Mammary epithelial cell (primary cell): ENCODE measurements at regions of chr10 and their contacts with region 1.

Region 1: GRCh38 chr10:17599089-17599488 is 18.1 kb downstream of the HACD1 start:
- DNase-seq: no peak
- H3K4me3 ChIP-seq: no peak overlapping the region
- H3K27ac ChIP-seq: no peak overlapping the region
- H3K4me1 ChIP-seq: no peaks in the 10 kb centered on the region
- H3K27me3 ChIP-seq: no peaks in the 10 kb centered on the region
- CTCF ChIP-seq: peak in 1 of 2 donors; percentile 32

Region 2: DNA sequence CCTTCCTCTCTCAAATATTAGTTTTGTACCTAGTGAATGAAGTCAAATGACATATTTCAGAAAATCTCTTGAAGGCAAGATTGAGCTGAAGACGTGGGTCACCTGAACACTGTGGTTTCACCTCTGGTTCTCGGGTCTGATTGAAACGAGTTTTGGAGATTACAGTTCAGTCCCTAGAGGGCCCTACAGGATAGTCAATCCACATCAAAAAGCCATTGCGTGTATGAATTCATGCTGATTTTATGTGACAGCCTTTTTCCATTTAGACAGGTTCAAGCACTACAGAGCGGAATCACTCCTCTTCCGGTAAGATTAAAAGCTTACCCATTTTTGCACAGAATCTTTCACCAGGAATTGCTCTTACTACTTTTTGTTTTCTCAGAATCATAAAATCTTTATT is 308.9 kb before region 1 on chr10:
- CTCF ChIA-PET with region 1: no interaction called
- dilution Hi-C with region 1: no loop called
- in situ Hi-C with region 1: no loop called
- intact Hi-C with region 1: loop called (anchors 1 kb)
- DNase-seq: peak; percentile 23
- H3K4me3 ChIP-seq: no peak overlapping the region
- H3K27ac ChIP-seq: no peak overlapping the region
- H3K4me1 ChIP-seq: no peaks in the 10 kb centered on the region
- H3K27me3 ChIP-seq: no peaks in the 10 kb centered on the region
- CTCF ChIP-seq: peak; percentile 34 to 63

Region 3: GRCh38 chr10:17409170-17409733 is 189.8 kb before region 1 on chr10:
- CTCF ChIA-PET with region 1: interaction called, 4 read pairs
- dilution Hi-C with region 1: no loop called
- in situ Hi-C with region 1: no loop called
- intact Hi-C with region 1: loop called (anchors 1 kb)
- DNase-seq: no peak
- H3K4me3 ChIP-seq: no peak overlapping the region
- H3K27ac ChIP-seq: no peak overlapping the region
- H3K4me1 ChIP-seq: no peaks in the 10 kb centered on the region
- H3K27me3 ChIP-seq: peaks cover 2% of the 10 kb centered on the region
- CTCF ChIP-seq: peak; percentile 53 to 54

Region 4: DNA sequence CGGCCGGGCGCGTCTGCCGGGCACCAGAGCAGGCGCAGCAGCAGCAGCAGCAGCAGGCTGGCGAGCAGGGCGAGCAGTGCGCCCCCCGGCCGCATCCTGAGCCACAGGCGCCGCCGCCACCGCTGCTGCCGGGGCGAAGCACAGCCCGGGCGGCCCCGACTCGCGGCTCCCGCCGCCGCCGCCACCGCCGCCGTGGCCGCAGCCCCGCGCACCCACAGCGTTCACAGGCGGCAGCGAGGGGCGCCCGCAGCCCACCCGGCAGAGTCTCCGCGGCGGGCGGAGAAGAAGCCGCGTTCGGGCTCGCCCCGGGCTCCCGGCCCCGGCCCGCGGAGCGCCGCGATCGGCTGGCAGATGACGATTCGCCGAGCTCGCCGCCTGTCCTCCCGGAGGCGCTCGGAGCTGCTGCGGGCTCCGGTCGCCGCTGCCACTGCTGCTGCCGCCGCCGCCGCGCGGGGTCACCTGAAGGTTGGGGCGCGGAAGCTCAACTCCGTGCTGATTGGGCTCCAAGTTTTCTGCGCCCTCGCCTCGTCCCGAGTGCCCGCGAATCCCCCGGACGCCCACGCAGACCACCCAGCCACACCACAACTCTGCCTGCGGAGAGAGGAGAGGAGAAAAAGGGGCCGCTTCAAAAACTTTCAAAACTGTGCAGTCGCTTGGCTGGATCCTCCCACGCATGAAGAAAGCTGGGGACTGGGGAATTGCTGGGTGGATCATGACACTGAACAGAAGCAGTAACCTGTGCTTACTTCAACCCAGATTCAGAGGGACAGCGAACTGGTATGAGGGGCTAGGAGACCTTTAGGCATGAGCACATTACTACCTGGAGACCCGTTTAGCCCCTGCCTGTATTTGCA is 144.7 kb before region 1 on chr10 and contains the start of gene ST8SIA6:
- CTCF ChIA-PET with region 1: no interaction called
- dilution Hi-C with region 1: no loop called
- in situ Hi-C with region 1: no loop called
- intact Hi-C with region 1: loop called (anchors 1 kb)
- DNase-seq: peak; percentile 42
- H3K4me3 ChIP-seq: peak within 1 kb of the TSS; percentile 37 to 51 (median 47)
- H3K27ac ChIP-seq: no peak within 1 kb of the TSS
- H3K4me1 ChIP-seq: peaks cover 6% of the 10 kb centered on the region
- H3K27me3 ChIP-seq: peaks cover 5% of the 10 kb centered on the region
- CTCF ChIP-seq: no peak
- total RNA-seq, gene ST8SIA6: 0.17 TPM in 1 of 2 donors, not detected in the other

Region 5: DNA sequence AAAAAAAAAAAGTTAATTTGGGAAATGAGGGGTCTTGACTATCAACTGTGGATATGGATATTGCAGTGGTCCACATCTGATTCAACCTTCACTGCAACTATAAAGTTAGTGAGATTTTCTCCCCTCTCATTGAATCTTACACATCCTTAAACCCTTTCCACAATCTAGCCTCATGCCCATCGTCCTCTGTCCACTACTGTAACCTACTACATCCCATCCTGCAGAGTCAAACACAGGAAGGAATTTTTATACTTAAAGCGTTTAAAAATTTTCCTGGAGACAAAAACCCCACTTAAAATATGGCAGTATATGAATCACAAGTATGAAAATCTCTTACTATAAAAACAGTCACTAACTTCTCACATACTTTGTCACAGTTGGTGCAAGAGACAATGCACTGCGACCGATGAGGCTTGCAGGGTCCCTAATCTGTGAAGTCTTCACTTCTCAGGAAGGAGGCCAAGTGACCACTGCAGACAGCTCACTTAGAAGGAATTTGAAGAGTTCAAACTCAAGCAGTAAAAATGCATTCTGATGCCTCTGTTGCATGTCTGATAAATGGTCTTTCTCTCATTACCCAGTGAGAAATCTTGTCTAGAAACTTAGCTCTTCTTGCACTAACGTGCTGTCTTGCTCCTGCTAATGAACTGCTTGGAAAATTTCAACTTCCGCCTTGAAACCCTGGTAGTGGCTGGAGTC is 94.4 kb before region 1 on chr10:
- CTCF ChIA-PET with region 1: no interaction called
- dilution Hi-C with region 1: no loop called
- in situ Hi-C with region 1: no loop called
- intact Hi-C with region 1: no loop called
- DNase-seq: no peak
- H3K4me3 ChIP-seq: no peak overlapping the region
- H3K27ac ChIP-seq: no peak overlapping the region
- H3K4me1 ChIP-seq: no peaks in the 10 kb centered on the region
- H3K27me3 ChIP-seq: no peaks in the 10 kb centered on the region
- CTCF ChIP-seq: no peak